ENCODE measurements at regions of chr12 and their contacts with region 1.

Region 1: DNA sequence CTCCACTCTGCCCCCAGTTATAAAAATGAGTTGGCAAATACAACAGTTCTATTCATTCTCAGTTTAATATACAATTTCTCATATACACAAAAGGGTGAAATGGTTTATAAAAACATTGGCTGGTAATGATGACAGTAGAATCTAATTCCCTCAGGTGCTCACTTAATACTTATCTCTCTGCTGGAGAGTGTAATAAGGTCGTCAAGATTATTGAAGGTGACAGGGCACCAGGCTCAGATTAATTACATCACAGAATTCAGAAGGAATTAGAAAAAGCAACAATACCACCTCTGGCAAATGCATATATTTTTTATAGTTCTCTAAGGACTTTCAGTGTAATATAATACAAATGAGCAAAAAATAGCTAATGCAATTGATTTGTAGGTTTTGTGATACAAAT is 42.3 kb downstream of the ATXN7L3B start:
- DNase-seq: no peak
- ATAC-seq: no peak
- H3K4me3 ChIP-seq: no peak overlapping the region
- H3K27ac ChIP-seq: no peak overlapping the region
- H3K4me1 ChIP-seq: no peaks in the 10 kb centered on the region
- H3K27me3 ChIP-seq: no peaks in the 10 kb centered on the region

Region 2: DNA sequence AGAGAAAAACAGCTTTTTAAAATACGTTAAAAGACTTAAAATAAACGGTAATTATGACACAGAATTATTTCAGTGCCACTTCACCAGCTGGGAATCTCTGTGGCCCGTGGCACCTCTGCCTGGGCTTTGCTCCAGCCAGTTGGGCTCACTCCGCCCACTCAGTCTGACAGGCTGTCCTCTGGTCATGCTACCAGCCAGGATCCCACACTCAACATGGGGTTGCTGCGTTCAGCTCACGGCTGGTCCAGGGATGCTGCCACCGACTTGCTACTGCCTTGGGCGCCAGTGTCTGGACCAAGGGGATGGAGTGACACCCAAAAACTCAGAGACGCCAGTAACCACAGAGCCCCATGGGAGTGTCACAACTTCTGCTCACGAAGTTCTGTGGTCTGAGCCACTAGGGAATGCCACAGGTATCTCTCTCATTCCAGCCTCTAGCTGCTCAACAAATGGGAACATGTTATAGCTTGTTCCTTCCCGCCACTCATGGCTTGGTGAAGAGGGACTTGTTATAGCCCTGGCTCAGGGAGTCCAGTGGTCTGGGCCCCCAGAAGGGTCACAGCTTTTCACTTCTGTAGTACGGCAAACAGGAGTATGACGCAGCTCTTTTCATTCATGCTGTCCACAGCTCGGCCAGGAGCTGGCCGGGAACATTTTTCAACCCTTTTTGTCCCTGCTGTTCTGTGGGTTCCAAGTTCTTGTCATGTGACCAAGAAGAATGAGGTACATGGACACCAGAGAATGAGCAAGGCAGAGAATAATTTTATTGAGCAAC is 65.7 kb before region 1 on chr12:
- intact Hi-C with region 1: loop called (anchors 10 kb)
- DNase-seq: no peak
- ATAC-seq: no peak
- H3K4me3 ChIP-seq: no peak overlapping the region
- H3K27ac ChIP-seq: no peak overlapping the region
- H3K4me1 ChIP-seq: no peaks in the 10 kb centered on the region
- H3K27me3 ChIP-seq: no peaks in the 10 kb centered on the region

Region 3: GRCh38 chr12:74537707-74538385 is 42.1 kb before region 1 on chr12 and contains the start of gene ATXN7L3B:
- intact Hi-C with region 1: no loop called
- DNase-seq: peak; percentile 95 to 98
- ATAC-seq: peak; percentile 99
- H3K4me3 ChIP-seq: peak within 1 kb of the TSS; percentile 54 to 95
- H3K27ac ChIP-seq: peak within 1 kb of the TSS; percentile 34 to 66
- H3K4me1 ChIP-seq: peaks cover 1 to 7% of the 10 kb centered on the region in 2 donors
- H3K27me3 ChIP-seq: no peaks in the 10 kb centered on the region
- total RNA-seq, gene ATXN7L3B: 19.0 to 21.5 TPM

Region 4: DNA sequence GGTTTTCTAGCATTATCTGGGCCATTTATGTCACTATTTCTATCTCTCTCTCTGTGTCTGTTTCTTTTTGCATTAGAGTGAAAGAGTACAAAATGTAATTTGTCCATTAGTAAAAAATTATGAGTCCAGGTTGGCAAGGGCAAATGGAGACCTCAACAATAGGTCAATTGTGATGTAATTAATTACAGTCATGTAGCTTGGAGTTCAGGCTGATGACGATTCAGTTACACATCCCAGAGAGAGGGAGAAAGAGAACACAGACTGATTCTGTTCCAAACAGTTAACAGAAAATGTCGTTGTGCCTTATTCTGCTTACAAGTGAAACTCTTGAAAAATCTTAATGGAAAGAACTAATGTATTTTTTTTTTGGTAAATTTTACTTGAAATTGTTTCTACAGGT is 40.9 kb after region 1 on chr12:
- intact Hi-C with region 1: no loop called
- DNase-seq: no peak
- ATAC-seq: no peak
- H3K4me3 ChIP-seq: no peak overlapping the region
- H3K27ac ChIP-seq: no peak overlapping the region
- H3K4me1 ChIP-seq: no peaks in the 10 kb centered on the region
- H3K27me3 ChIP-seq: no peaks in the 10 kb centered on the region

Region 5: GRCh38 chr12:74663958-74664357 is 84.0 kb after region 1 on chr12:
- intact Hi-C with region 1: no loop called
- DNase-seq: peak in 1 of 2 donors; percentile 67
- ATAC-seq: no peak
- H3K4me3 ChIP-seq: no peak overlapping the region
- H3K27ac ChIP-seq: no peak overlapping the region
- H3K4me1 ChIP-seq: no peaks in the 10 kb centered on the region
- H3K27me3 ChIP-seq: no peaks in the 10 kb centered on the region